ENCODE measurements at regions of chr3 and their contacts with region 1.

Region 1: GRCh38 chr3:34056951-34057390 is 258.5 kb downstream of the PDCD6IP start:
- DNase-seq: peak; percentile 89
- ATAC-seq: peak; percentile 93
- H3K4me3 ChIP-seq: no peak overlapping the region
- H3K27ac ChIP-seq: peak overlapping the region; percentile 4; the same call in 1 of the 2 replicates
- H3K4me1 ChIP-seq: peaks cover 13% of the 10 kb centered on the region
- H3K27me3 ChIP-seq: no peaks in the 10 kb centered on the region
- CTCF ChIP-seq: no peak
- EP300 ChIP-seq: peak in 1 of 2 experiments; percentile 8; a peak in 1 of 4 replicates
- POLR2A ChIP-seq: no peak
- RAD21 ChIP-seq: no peak

Region 2: GRCh38 chr3:34073961-34074360 is 17.0 kb after region 1 on chr3:
- CTCF ChIA-PET with region 1: no interaction called
- POLR2A ChIA-PET with region 1: interaction called, 3 read pairs
- RAD21 ChIA-PET with region 1: no interaction called
- SMC1A ChIA-PET with region 1: interaction called, 3 read pairs
- in situ Hi-C with region 1: no loop called
- intact Hi-C with region 1: loop called (anchors 1 kb)
- DNase-seq: no peak
- ATAC-seq: peak; percentile 60
- H3K4me3 ChIP-seq: no peak overlapping the region
- H3K27ac ChIP-seq: no peak overlapping the region
- H3K4me1 ChIP-seq: peaks cover 46% of the 10 kb centered on the region
- H3K27me3 ChIP-seq: no peaks in the 10 kb centered on the region
- CTCF ChIP-seq: no peak
- EP300 ChIP-seq: no peak
- POLR2A ChIP-seq: no peak
- RAD21 ChIP-seq: no peak

Region 3: DNA sequence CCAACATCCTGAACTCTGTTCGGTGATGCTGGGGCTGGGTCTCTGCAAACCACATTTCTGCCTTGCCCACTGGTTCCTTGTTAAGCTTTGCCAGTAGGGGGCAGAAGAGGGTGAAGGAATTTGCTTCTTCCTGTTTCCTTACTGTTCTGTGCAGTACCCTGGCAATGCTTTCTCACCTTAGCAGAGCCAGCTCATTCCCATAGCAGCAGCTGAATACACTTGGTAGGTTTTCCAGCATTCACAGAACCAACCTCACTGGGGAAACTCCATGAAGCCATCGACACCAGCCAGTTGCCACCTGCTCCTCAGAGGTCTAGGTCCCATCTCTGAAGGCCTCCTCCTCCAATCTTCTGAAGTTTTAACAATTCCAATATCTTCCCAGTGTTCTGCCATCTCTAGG is 49.9 kb after region 1 on chr3:
- CTCF ChIA-PET with region 1: interaction called, 3 read pairs
- POLR2A ChIA-PET with region 1: no interaction called
- RAD21 ChIA-PET with region 1: no interaction called
- SMC1A ChIA-PET with region 1: interaction called, 3 read pairs
- in situ Hi-C with region 1: no loop called
- intact Hi-C with region 1: loop called (anchors 2 kb)
- DNase-seq: peak; percentile 51
- ATAC-seq: peak; percentile 73
- H3K4me3 ChIP-seq: no peak overlapping the region
- H3K27ac ChIP-seq: peak overlapping the region; percentile 60
- H3K4me1 ChIP-seq: peaks cover 36% of the 10 kb centered on the region
- H3K27me3 ChIP-seq: no peaks in the 10 kb centered on the region
- CTCF ChIP-seq: peak; percentile 57 to 78 (median 69)
- EP300 ChIP-seq: no peak
- POLR2A ChIP-seq: no peak
- RAD21 ChIP-seq: peak; percentile 69

Measured in GM12878 (cell line).